MCF 10A (cell line): ENCODE measurements at regions of chr15 and their contacts with region 1.

Region 1: DNA sequence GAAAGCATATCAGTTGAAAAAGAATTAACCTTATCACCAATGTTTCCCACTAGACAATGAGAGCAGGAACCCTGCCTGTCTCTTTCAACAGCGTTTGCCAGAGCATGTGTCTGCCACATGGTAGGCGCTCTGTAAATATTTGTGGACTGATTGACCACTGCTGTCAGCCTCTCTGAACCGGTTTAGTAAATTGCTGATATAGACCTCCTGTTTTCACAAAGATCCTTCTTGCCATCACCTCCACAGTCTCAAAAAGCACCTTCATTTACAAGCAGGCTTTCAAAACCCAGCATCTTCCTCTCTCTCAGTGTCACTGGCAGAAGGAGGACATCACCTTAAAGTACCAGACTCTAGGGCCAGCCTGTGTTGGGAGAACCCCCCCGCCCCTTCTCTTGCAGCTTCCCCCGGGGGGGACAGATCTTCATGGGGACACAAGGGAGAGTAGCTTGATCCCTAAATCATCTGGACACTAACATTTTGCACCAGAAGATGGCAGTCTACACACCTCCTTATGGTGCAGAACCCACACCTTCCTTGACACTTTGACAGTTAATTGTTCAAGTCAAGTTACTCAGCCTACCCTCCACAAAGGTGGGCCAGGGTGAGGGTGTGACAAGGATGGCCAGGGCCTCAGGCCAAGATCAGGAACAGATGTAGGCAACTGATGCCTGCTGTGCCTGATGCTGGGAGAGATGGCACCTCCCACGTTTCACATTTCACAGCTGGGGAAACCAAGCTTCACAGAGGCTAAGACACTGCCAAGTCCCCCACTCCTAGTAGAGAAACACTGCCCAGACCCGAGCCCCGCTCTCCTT is 37.8 kb upstream of the USP3 start:
- DNase-seq: peak; percentile 82
- H3K4me3 Mint-ChIP-seq: no peak overlapping the region
- H3K27ac Mint-ChIP-seq: no peak overlapping the region
- H3K4me1 Mint-ChIP-seq: no peaks in the 10 kb centered on the region
- H3K27me3 Mint-ChIP-seq: no peaks in the 10 kb centered on the region
- CTCF ChIP-seq: peak; percentile 61

Region 2: DNA sequence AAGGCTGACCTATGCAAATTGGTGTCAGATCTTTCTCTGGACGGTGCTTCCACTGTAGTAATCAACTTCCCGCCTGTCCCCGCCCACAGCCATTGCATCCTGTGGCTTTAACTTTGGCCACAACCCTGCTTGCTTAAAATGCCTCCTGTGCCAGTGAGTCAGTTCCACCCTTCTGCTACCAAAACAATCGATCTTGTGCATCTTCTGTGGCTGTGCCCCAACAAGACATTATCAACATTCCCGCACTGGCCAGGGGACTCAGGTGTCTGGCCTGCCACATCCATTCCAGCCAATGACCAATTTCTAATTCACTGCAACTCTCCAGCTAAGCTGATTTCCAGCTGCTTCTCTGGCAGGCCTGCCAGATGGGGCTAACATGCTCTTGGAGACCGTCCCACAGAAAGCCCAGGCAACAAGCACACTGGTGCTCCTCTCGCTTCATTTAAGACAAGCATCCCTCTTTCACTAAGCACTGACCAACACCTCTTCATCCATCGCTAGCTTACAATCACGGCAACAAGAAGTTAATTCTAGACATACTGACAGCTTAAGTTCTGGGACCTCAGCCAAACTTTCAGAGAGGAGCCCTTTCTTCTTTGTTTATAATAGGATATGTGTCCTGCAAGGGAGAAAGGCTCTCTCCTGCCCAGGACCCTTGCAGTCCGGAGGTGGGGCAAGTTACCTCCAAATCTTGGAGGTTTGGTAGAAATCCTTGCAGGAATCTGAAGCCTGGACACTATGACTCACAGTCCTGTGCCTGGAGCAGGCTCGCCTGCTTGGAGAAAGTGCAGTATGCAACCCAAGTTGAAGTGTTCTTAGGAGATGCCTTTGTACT is 91.7 kb before region 1 on chr15:
- CTCF ChIA-PET with region 1: no interaction called
- POLR2A ChIA-PET with region 1: no interaction called
- intact Hi-C with region 1: no loop called
- DNase-seq: peak; percentile 82
- H3K4me3 Mint-ChIP-seq: peak overlapping the region; percentile 16
- H3K27ac Mint-ChIP-seq: peak overlapping the region; percentile 87
- H3K4me1 Mint-ChIP-seq: peaks cover 57% of the 10 kb centered on the region
- H3K27me3 Mint-ChIP-seq: no peaks in the 10 kb centered on the region
- CTCF ChIP-seq: no peak

Region 3: DNA sequence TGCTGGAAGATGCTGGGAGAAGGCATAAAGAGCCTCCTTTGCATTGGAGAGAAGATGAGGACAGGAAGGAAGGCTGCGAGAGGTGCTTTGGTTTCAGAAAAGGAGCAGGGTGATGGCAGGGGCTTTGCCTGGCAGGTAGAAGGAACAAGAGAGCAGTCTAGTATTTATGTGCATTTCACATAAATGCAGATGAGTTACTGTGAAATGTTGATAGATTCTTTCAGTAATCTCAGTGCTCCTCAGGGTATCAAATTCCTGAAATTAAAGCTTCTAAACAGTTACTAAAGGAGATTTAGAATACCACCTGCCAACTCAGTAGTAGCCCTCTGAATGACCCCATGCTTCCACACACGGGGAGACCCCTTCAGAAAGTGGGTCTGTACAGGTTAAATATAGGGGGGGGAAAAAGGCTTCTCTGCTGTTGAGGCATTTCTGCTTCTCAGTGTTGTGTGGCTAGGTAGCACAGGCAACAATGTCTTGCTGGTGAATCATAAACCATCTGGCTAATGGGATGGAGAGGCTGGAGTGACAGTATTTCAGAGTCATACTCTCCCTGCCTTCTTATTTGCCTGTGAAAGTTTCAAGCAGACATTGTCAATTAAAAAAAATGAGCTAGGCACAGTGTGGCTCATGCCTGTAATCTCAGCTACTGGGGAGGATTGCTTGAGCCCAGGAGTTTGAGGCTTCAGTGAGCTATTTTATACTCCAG is 116.3 kb after region 1 on chr15:
- CTCF ChIA-PET with region 1: interaction called, 11 read pairs
- POLR2A ChIA-PET with region 1: no interaction called
- intact Hi-C with region 1: no loop called
- DNase-seq: no peak
- H3K4me3 Mint-ChIP-seq: no peak overlapping the region
- H3K27ac Mint-ChIP-seq: no peak overlapping the region
- H3K4me1 Mint-ChIP-seq: peaks cover 12% of the 10 kb centered on the region
- H3K27me3 Mint-ChIP-seq: no peaks in the 10 kb centered on the region
- CTCF ChIP-seq: no peak